CD4-positive, alpha-beta memory T cell (primary cell): ENCODE measurements at regions of chr12 and their contacts with region 1.

Region 1: GRCh38 chr12:1594261-1595025 is at the start of gene FBXL14:
- DNase-seq: peak; percentile 91 to 93 (median 92)
- H3K4me3 ChIP-seq: peak within 1 kb of the TSS; percentile 77 to 95
- H3K4me3 Mint-ChIP-seq: peak within 1 kb of the TSS; percentile 92 to 96 (median 94)
- H3K27ac ChIP-seq: peak within 1 kb of the TSS; percentile 68
- H3K27ac Mint-ChIP-seq: peak within 1 kb of the TSS; percentile 92 to 99 (median 98)
- H3K4me1 ChIP-seq: peaks cover 42% of the 10 kb centered on the region
- H3K4me1 Mint-ChIP-seq: peaks cover 34 to 68% (median 42%) of the 10 kb centered on the region in 4 donors
- H3K27me3 ChIP-seq: no peaks in the 10 kb centered on the region
- H3K27me3 Mint-ChIP-seq: no peaks in the 10 kb centered on the region
- total RNA-seq, gene FBXL14: 41.6 to 43.4 TPM

Region 2: DNA sequence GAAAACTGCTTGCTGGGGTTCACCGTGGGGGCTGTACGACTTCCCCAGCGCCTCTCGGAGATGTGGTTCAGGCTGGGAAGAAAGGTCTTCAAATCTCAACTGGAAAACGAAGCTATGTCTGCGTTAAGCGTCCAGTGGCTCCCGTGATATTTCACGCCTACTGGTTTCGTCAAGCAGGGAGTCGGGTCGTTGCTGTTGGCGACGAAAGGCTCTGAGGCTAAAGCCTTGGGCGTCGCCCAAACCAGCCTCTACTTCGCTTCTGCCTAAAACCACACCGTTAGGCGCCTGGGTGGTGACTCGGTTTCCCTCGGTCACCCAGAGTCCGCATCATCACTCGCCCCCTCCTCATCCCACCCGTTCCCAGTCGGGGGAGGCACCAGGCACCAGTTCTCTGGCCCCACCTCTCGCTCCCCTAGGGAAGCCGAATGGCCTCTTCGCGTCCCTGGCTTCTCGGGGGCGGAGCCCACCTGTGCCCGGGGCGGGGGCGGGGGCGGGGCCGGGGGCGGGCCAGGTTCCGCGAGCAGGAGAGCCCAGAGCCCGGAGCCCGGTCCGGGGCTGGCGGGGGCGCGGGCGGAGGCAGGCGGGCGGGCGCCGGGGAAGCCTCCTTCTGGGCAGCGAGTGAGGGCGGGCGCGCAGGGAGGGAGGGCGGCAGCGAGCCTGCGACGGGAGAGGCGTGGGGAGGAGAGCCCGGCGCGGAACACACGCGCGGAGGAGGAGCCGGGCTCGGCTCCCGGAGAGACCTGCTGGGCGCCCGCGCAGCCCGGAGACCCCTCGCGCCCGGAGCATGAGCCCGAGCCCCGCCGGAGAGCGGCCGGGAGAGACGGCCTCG is 1134.8 kb before region 1 on chr12 and contains the start of gene B4GALNT3:
- CTCF ChIA-PET with region 1: no interaction called
- POLR2A ChIA-PET with region 1: no interaction called
- intact Hi-C with region 1: loop called (anchors 10 kb)
- DNase-seq: peak; percentile 42 to 62 (median 43)
- H3K4me3 ChIP-seq: peak within 1 kb of the TSS; percentile 58 to 72
- H3K4me3 Mint-ChIP-seq: peak within 1 kb of the TSS; percentile 79 to 92 (median 86)
- H3K27ac ChIP-seq: no peak within 1 kb of the TSS
- H3K27ac Mint-ChIP-seq: peak within 1 kb of the TSS in 5 of 7 donors; percentile 22 to 77 (median 69)
- H3K4me1 ChIP-seq: peaks cover 9% of the 10 kb centered on the region
- H3K4me1 Mint-ChIP-seq: peaks cover 17 to 42% (median 22%) of the 10 kb centered on the region in 4 donors
- H3K27me3 ChIP-seq: no peaks in the 10 kb centered on the region
- H3K27me3 Mint-ChIP-seq: peaks cover 0 to 3% of the 10 kb centered on the region in 2 donors
- total RNA-seq, gene B4GALNT3: 2.1 to 2.6 TPM

Region 3: GRCh38 chr12:990661-991349 is 603.6 kb before region 1 on chr12 and contains the start of gene ERC1:
- CTCF ChIA-PET with region 1: no interaction called
- POLR2A ChIA-PET with region 1: interaction called, 15 read pairs
- intact Hi-C with region 1: loop called (anchors 5 kb)
- DNase-seq: peak; percentile 78 to 90 (median 85)
- H3K4me3 ChIP-seq: peak within 1 kb of the TSS; percentile 69 to 78
- H3K4me3 Mint-ChIP-seq: peak within 1 kb of the TSS; percentile 92 to 100 (median 98)
- H3K27ac ChIP-seq: peak within 1 kb of the TSS; percentile 69
- H3K27ac Mint-ChIP-seq: peak within 1 kb of the TSS; percentile 89 to 99 (median 98)
- H3K4me1 ChIP-seq: peaks cover 31% of the 10 kb centered on the region
- H3K4me1 Mint-ChIP-seq: peaks cover 27 to 45% (median 39%) of the 10 kb centered on the region in 4 donors
- H3K27me3 ChIP-seq: no peaks in the 10 kb centered on the region
- H3K27me3 Mint-ChIP-seq: no peaks in the 10 kb centered on the region
- total RNA-seq, gene ERC1: 34.3 to 41.7 TPM

Region 4: DNA sequence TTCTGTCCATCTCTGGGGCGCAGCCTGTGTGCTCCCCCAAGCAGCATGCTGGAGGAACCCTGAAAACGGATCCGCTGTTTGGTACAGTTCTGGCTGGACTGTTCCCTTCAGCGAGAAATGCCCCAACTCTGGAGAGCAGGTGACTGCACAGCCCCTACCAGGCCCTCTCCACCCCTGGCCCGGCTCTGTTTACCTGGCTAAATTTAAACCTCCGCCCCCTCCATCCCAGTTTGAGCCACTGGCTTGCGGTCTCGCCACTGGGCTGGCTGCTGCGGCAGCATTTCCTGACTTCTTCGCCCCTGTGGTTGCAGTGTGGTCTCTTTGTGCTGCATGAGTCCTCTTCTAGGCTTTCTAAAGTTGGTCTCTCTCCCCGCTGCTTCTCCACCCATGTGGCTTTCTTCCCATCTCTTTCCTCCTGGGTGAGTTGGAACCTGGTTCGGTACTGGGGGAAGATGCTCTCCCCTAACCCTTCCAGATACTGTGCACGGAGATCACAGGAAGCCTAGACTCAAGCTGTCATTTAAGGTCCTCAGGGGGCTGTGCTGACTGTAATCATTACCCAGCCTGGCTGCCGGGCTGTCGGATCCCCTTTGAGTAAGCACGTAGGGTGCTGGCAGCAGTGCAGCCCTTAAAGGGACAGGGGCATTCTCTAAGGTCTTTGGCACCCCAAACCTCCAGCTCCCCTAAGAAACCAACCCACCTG is 60.7 kb before region 1 on chr12:
- CTCF ChIA-PET with region 1: interaction called, 3 read pairs
- POLR2A ChIA-PET with region 1: interaction called, 3 read pairs
- intact Hi-C with region 1: loop called (anchors 5 kb)
- DNase-seq: peak; percentile 30 to 45 (median 41)
- H3K4me3 ChIP-seq: peak overlapping the region in 1 of 2 donors; percentile 18
- H3K4me3 Mint-ChIP-seq: peak overlapping the region; percentile 81 to 91 (median 86)
- H3K27ac ChIP-seq: no peak overlapping the region
- H3K27ac Mint-ChIP-seq: peak overlapping the region in 3 of 7 donors; percentile 2 to 58 (median 23)
- H3K4me1 ChIP-seq: peaks cover 37% of the 10 kb centered on the region
- H3K4me1 Mint-ChIP-seq: peaks cover 22 to 34% (median 26%) of the 10 kb centered on the region in 4 donors
- H3K27me3 ChIP-seq: peaks cover 41% of the 10 kb centered on the region
- H3K27me3 Mint-ChIP-seq: peaks cover 44 to 54% of the 10 kb centered on the region in 2 donors

Region 5: GRCh38 chr12:1605129-1606020 is 10.9 kb after region 1 on chr12:
- CTCF ChIA-PET with region 1: interaction called, 34 read pairs
- POLR2A ChIA-PET with region 1: interaction called, 142 read pairs
- intact Hi-C with region 1: loop called (anchors 1 kb)
- DNase-seq: peak; percentile 65 to 73 (median 70)
- H3K4me3 ChIP-seq: peak overlapping the region in 1 of 2 donors; percentile 49
- H3K4me3 Mint-ChIP-seq: peak overlapping the region; percentile 82 to 92 (median 86)
- H3K27ac ChIP-seq: no peak overlapping the region
- H3K27ac Mint-ChIP-seq: peak overlapping the region in 5 of 7 donors; percentile 51 to 87 (median 66)
- H3K4me1 ChIP-seq: peaks cover 27% of the 10 kb centered on the region
- H3K4me1 Mint-ChIP-seq: peaks cover 17 to 41% (median 28%) of the 10 kb centered on the region in 4 donors
- H3K27me3 ChIP-seq: no peaks in the 10 kb centered on the region
- H3K27me3 Mint-ChIP-seq: no peaks in the 10 kb centered on the region

Region 6: GRCh38 chr12:1690578-1691122 is 96.2 kb after region 1 on chr12 and contains the start of gene ADIPOR2:
- CTCF ChIA-PET with region 1: no interaction called
- POLR2A ChIA-PET with region 1: interaction called, 4 read pairs
- intact Hi-C with region 1: loop called (anchors 1 kb)
- DNase-seq: peak; percentile 93 to 95 (median 94)
- H3K4me3 ChIP-seq: peak within 1 kb of the TSS; percentile 70 to 87
- H3K4me3 Mint-ChIP-seq: peak within 1 kb of the TSS; percentile 88 to 97 (median 93)
- H3K27ac ChIP-seq: peak within 1 kb of the TSS; percentile 73
- H3K27ac Mint-ChIP-seq: peak within 1 kb of the TSS; percentile 96 to 99 (median 99)
- H3K4me1 ChIP-seq: peaks cover 27% of the 10 kb centered on the region
- H3K4me1 Mint-ChIP-seq: peaks cover 26 to 53% (median 35%) of the 10 kb centered on the region in 4 donors
- H3K27me3 ChIP-seq: no peaks in the 10 kb centered on the region
- H3K27me3 Mint-ChIP-seq: peaks cover 0 to 1% of the 10 kb centered on the region in 2 donors
- total RNA-seq, gene ADIPOR2: 35.7 to 36.2 TPM